ENCODE measurements at regions of chr1 and their contacts with region 1.

Region 1: DNA sequence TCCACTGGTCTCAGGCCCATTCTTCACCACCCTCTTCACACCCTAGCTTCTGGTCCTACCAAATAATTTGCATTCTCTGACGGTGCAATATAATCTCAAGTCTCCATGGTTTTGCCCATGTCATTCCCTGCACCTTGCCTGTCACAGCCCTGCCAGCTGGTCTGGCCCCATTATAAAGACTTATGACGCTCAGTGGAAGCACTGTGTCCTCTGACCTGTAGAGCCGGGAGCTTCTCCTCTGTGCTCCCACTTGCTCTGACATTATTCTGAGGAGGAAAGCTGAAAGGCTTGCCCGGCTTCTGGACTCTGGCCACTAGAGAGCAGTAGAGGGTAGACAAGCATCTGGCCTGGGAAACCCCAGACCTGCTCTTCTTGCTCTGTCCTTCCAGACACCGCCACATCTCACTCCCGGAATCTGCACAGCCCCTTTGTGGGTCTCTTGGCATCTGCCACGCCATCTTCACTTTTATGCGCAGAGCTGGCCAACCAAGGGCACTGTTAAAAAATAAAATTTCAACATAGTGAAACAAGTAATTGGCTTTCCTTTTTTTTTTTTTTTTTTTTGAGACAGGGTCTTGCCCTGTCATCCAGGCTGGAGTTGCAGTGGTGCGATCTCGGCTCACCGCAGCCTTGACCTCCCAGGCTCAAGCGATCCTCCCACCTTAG is 44.4 kb downstream of the NENF start:
- DNase-seq: peak; percentile 70
- ATAC-seq: peak; percentile 95
- H3K4me3 ChIP-seq: no peak overlapping the region
- H3K27ac ChIP-seq: no peak overlapping the region
- H3K4me1 ChIP-seq: peaks cover 9% of the 10 kb centered on the region; the same call in 1 of the 2 replicates
- H3K27me3 ChIP-seq: peaks cover 3 to 21% of the 10 kb centered on the region in 2 experiments; a peak in 2 of 5 replicates
- CTCF ChIP-seq: peak; percentile 88
- EP300 ChIP-seq: no peak
- POLR2A ChIP-seq: no peak
- RAD21 ChIP-seq: peak; percentile 81

Region 2: DNA sequence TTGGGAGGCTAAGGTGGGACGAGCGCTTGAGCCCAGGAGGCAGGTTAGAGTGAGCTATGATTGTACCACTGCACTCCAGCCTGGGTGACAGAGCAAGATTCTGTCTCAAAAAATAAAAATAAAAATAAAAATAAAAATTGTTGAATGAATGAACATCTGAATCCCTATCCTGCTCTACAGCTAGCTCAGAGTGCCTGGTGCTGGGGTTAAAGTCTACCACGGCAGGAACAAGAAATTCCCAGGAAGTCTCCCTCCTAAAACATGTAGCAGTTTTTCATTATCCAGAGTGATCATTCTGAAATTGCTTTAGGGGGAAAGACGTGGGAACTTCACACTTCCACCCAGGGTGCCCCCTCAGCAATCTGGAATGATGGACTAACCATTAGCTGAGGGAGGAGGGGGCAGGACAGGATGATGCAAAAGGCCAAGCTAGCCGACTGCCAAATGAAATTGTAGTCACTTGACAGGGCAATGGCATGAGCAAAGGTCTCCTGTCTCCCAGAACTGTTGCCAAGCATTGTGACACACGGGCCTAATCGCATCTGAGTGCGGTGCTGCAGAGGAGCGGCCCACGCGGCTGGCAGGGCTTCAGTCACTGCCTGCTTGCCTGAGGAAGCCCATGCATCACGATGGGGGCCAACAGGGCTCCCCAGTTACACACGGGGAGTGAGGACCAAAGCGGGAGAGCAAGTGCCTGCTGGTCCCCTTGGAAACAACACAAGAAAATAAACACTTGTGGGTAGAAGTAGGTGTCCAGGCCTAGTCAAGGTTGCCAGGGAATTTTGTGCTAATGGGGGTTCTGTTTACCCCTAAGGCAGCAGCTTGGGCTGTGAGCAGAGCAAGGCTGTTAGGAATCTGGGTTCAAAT is 41.3 kb after region 1 on chr1:
- CTCF ChIA-PET with region 1: no interaction called
- POLR2A ChIA-PET with region 1: no interaction called
- in situ Hi-C with region 1: no loop called
- intact Hi-C with region 1: loop called (anchors 5 kb)
- DNase-seq: peak; percentile 74
- ATAC-seq: peak; percentile 95
- H3K4me3 ChIP-seq: peak overlapping the region in 1 of 3 experiments; percentile 24; a peak in 2 of 6 replicates
- H3K27ac ChIP-seq: no peak overlapping the region
- H3K4me1 ChIP-seq: peaks cover 22% of the 10 kb centered on the region
- H3K27me3 ChIP-seq: peaks cover 0 to 10% of the 10 kb centered on the region in 2 experiments; a peak in 1 of 5 replicates
- CTCF ChIP-seq: no peak
- EP300 ChIP-seq: no peak; a peak in 1 of 4 replicates
- POLR2A ChIP-seq: 0 out of 4 replicates have a peak, but pooled peaks of 1 of the 2 experiments have one; percentile 39
- RAD21 ChIP-seq: no peak

Region 3: DNA sequence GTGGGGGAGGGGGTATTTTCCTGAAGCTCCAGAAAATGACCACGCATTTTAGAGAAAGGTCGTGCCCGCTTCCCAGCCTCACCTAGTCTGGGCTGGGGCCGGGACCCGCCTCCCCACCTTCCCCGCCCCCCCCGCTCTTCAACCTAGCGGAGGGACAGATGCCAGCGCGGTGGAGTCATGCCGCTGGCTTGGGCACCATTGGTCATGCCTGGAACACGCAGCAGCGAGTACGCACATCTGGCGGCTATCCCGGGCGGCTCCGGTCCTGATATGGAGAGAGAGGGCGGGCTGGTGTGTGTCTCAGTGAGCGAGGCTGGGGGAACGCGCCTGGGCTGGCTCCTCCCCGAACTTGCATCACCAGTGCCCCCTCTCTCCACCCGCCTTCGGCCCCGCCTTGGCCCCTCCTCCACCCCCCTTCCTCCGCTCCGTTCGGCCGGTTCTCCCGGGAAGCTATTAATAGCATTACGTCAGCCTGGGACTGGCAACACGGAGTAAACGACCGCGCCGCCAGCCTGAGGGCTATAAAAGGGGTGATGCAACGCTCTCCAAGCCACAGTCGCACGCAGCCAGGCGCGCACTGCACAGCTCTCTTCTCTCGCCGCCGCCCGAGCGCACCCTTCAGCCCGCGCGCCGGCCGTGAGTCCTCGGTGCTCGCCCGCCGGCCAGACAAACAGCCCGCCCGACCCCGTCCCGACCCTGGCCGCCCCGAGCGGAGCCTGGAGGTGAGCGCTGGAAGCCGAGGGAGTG is 131.2 kb after region 1 on chr1 and contains the start of gene ATF3:
- CTCF ChIA-PET with region 1: no interaction called
- POLR2A ChIA-PET with region 1: interaction called, 14 read pairs
- in situ Hi-C with region 1: no loop called
- intact Hi-C with region 1: loop called (anchors 1 kb)
- DNase-seq: peak; percentile 95
- ATAC-seq: peak; percentile 88
- H3K4me3 ChIP-seq: peak within 1 kb of the TSS; percentile 76 to 83 (median 77)
- H3K27ac ChIP-seq: peak within 1 kb of the TSS; percentile 60
- H3K4me1 ChIP-seq: peaks cover 48% of the 10 kb centered on the region
- H3K27me3 ChIP-seq: peaks cover 11 to 42% of the 10 kb centered on the region in 2 experiments
- CTCF ChIP-seq: peak; percentile 25; the same call in 1 of the 2 replicates
- EP300 ChIP-seq: peak in 1 of 2 experiments; percentile 27; a peak in 1 of 4 replicates
- POLR2A ChIP-seq: peak; percentile 98 to 99
- RAD21 ChIP-seq: no peak
- total RNA-seq, gene ATF3: 3.6 and 5.0 TPM in 2 replicates

Region 4: GRCh38 chr1:212621951-212622305 is 144.8 kb after region 1 on chr1:
- CTCF ChIA-PET with region 1: no interaction called
- POLR2A ChIA-PET with region 1: no interaction called
- in situ Hi-C with region 1: loop called (anchors 10 kb)
- intact Hi-C with region 1: no loop called
- DNase-seq: no peak
- ATAC-seq: no peak
- H3K4me3 ChIP-seq: no peak overlapping the region
- H3K27ac ChIP-seq: no peak overlapping the region
- H3K4me1 ChIP-seq: no peaks in the 10 kb centered on the region
- H3K27me3 ChIP-seq: peaks cover 0 to 4% of the 10 kb centered on the region in 2 experiments; a peak in 1 of 5 replicates
- CTCF ChIP-seq: no peak
- EP300 ChIP-seq: no peak
- POLR2A ChIP-seq: no peak
- RAD21 ChIP-seq: no peak

Region 5: DNA sequence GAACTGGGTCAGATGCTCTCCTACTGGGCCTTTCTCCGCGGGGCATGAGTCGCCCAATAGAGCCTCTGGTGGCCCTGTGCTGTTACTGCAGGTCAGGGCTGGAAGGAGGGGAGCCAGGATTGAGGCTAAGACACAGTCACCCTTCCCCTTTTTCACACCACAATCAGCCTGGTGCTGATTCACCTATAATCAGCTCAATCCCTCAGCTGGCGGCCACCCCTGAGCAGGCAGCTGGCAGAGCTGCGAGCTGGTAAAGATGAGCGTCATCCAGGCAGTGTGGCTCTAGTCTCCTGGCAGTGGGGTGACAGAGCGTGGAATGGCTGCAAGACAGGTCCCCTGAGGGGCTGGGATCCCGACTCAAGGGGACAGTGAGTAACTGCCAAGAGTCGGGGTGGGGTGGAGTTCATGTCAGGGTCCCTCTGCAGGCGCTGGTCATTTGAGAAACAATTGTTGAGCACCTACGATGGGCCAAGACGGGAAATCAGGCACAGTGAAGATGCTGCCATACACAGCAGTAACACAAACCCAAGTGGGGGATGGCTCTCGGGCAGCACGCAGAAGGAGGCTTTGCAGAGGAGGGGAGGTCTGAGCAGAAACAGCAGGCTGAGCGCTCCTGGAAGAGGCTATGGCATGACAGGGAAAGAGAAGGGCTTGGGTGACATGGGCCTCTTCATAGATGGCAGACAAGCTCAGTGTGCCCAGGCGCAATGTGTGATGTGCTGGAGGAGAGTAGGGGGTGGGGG is 153.2 kb after region 1 on chr1:
- CTCF ChIA-PET with region 1: interaction called, 12 read pairs
- POLR2A ChIA-PET with region 1: no interaction called
- in situ Hi-C with region 1: loop called (anchors 10 kb)
- intact Hi-C with region 1: loop called (anchors 1 kb)
- DNase-seq: peak; percentile 48
- ATAC-seq: peak; percentile 93
- H3K4me3 ChIP-seq: no peak overlapping the region
- H3K27ac ChIP-seq: no peak overlapping the region
- H3K4me1 ChIP-seq: peaks cover 28% of the 10 kb centered on the region
- H3K27me3 ChIP-seq: peaks cover under 1 to 27% of the 10 kb centered on the region in 2 experiments; a peak in 3 of 5 replicates
- CTCF ChIP-seq: peak; percentile 76
- EP300 ChIP-seq: no peak
- POLR2A ChIP-seq: no peak
- RAD21 ChIP-seq: peak; percentile 58

Region 6: GRCh38 chr1:212665241-212666115 is 188.3 kb after region 1 on chr1:
- CTCF ChIA-PET with region 1: no interaction called
- POLR2A ChIA-PET with region 1: no interaction called
- in situ Hi-C with region 1: no loop called
- intact Hi-C with region 1: loop called (anchors 1 kb)
- DNase-seq: peak; percentile 51
- ATAC-seq: peak; percentile 98
- H3K4me3 ChIP-seq: peak overlapping the region; percentile 66 to 85 (median 70)
- H3K27ac ChIP-seq: no peak overlapping the region
- H3K4me1 ChIP-seq: peaks cover 34% of the 10 kb centered on the region
- H3K27me3 ChIP-seq: peaks cover 2 to 26% of the 10 kb centered on the region in 2 experiments; a peak in 4 of 5 replicates
- CTCF ChIP-seq: peak; percentile 99
- EP300 ChIP-seq: no peak
- POLR2A ChIP-seq: no peak
- RAD21 ChIP-seq: peak; percentile 96

Region 7: GRCh38 chr1:212782422-212783154 is 305.4 kb after region 1 on chr1:
- CTCF ChIA-PET with region 1: interaction called, 6 read pairs
- POLR2A ChIA-PET with region 1: no interaction called
- in situ Hi-C with region 1: no loop called
- intact Hi-C with region 1: loop called (anchors 10 kb)
- DNase-seq: peak; percentile 3
- ATAC-seq: no peak
- H3K4me3 ChIP-seq: no peak overlapping the region
- H3K27ac ChIP-seq: no peak overlapping the region
- H3K4me1 ChIP-seq: peaks cover 10% of the 10 kb centered on the region; the same call in 1 of the 2 replicates
- H3K27me3 ChIP-seq: no peaks in the 10 kb centered on the region; a peak in 1 of 5 replicates
- CTCF ChIP-seq: peak; percentile 62
- EP300 ChIP-seq: no peak
- POLR2A ChIP-seq: no peak
- RAD21 ChIP-seq: peak; percentile 15; the same call in 1 of the 2 replicates